ENCODE measurements at regions of chr19 and their contacts with region 1.

Region 1: DNA sequence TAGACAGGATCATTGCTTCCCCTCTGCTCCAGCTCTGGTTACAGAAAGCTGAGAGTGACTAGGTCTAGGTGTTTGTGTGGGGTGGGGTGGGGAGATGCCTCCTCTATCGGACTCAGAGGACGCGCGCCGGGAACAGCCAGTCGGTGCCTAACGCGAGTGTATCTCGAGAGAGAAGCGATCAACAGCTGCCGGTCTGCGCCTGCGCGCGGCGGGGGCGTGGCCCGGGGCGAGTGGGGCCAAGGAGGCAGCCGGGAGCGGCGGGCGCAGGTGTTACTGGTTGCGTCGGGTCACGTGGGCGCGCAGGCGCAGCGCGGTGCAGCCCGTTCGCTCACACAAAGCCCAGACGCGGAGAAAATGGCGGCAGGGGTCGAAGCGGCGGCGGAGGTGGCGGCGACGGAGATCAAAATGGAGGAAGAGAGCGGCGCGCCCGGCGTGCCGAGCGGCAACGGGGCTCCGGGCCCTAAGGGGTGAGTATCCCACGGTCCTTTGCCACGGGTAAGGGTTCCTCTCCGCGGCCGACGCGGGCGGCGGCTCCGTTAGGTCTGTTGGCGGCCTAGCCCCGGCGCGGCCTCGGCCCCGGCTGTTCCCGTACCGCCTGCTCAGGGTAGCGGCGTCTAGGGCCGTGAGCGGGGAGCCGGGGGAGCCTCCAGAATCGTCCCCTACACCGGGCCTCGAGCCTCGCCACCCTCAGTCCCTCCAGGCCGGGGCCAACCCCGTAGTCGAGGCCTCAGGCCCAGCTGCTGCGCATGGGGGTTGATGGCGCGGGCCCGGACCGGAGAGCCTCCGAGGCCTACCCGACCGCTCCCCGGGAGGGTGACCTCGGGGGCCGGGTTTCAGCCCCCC is at the start of gene HNRNPM:
- DNase-seq: peak; percentile 99 to 100
- ATAC-seq: peak; percentile 98 to 100 (median 99)
- H3K4me3 ChIP-seq: peak within 1 kb of the TSS; percentile 81 to 99 (median 90)
- H3K27ac ChIP-seq: peak within 1 kb of the TSS; percentile 90 to 99 (median 97)
- H3K4me1 ChIP-seq: peaks cover 23 to 48% (median 42%) of the 10 kb centered on the region in 9 donors
- H3K27me3 ChIP-seq: no peaks in the 10 kb centered on the region
- CTCF ChIP-seq: no peak
- total RNA-seq, gene HNRNPM: 87.4 to 127 (median 93.9) TPM

Region 2: DNA sequence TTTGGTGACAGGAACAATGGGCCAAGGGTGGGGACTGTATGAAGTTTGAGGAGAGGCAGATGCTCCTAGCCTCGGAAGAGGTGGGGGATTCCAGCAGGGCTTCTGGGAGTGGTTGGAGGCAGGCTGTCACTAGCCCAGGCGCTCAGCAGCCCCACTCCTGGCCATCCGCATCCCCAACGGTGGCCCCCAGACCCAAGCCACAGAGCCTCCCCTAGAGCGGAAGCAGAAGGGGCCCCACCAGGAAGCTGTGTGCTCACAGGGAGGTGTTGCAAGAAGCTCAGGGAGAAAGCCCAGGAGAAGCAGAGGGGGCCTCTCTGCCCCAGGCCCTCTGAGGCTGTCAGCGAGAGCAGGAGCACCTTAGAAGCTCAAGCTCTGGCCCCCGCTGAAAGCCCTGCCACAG is 49.3 kb after region 1 on chr19:
- intact Hi-C with region 1: no loop called
- DNase-seq: no peak
- ATAC-seq: peak in 1 of 8 donors; percentile 26
- H3K4me3 ChIP-seq: no peak overlapping the region
- H3K27ac ChIP-seq: peak overlapping the region in 1 of 10 donors; percentile 69
- H3K4me1 ChIP-seq: peaks cover 0 to 16% (median 0%) of the 10 kb centered on the region in 9 donors
- H3K27me3 ChIP-seq: no peaks in the 10 kb centered on the region
- CTCF ChIP-seq: no peak

Region 3: DNA sequence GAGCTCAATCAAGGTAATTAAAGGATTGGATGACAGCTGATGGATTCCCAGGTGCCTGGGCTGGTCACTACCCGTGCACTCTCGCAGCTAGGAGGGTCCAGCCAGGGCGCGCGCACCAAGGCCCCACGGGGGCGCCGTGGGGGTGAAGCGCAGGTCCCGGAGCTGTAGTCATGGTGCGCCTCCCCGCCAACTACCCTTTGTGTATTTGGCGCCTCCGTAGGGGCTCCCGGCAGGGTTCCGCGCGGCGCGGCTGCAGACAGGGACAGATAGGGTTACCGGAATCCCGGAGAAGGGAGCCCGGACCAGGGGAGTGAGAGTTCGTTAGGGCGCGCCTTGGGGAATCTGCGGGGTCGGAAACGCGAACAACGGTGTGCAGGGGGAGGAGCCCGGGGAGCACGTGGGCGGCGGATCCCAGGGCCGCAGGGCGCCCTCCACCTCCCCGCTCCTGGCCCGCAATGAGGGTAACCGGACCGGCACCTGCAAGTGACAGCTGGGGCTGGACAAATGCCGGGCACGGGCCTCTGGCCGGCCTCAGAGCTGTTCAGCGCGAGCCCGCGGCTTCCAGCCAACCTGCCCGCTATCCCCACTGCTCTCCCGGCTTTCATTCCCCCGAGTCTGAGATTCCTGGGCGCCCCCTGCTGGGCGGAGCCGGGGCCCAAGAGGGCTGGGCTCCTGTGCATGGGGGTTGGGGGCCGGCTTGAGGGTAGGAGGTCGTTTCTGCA is 61.0 kb after region 1 on chr19:
- intact Hi-C with region 1: loop called in 1 of 10 experiments (anchors 10 kb)
- DNase-seq: peak; percentile 78 to 86
- ATAC-seq: peak; percentile 85 to 92 (median 90)
- H3K4me3 ChIP-seq: peak overlapping the region; percentile 23 to 70 (median 62)
- H3K27ac ChIP-seq: peak overlapping the region in 8 of 10 donors; percentile 13 to 58 (median 35)
- H3K4me1 ChIP-seq: peaks cover 2 to 55% (median 14%) of the 10 kb centered on the region in 9 donors
- H3K27me3 ChIP-seq: no peaks in the 10 kb centered on the region
- CTCF ChIP-seq: peak; percentile 80 to 97 (median 89)